ENCODE measurements at regions of chr7 and their contacts with region 1.

Region 1: DNA sequence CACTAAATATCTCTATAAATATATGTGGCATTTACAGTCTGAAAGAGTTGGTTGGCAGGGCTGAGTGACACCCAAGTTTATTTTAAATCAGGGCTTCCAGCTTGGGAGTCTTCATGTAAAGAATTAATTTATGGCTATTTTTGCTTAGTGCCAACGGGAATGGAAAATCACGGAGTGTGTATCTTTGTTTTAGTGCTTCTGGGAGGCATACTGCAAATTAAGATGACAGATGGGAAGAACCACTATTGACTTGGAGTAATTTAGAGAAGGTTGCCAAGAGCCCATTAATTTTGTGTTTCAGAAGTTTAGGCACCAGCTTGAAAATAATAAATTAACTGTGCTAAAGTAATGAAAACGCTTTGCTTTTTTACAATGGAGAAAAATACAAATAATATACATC is 135.2 kb downstream of the GPR37 start:
- DNase-seq: no peak
- H3K4me3 ChIP-seq: no peak overlapping the region
- H3K27ac ChIP-seq: no peak overlapping the region
- H3K4me1 ChIP-seq: no peaks in the 10 kb centered on the region
- H3K27me3 ChIP-seq: no peaks in the 10 kb centered on the region

Region 2: GRCh38 chr7:124219681-124220080 is 410.7 kb before region 1 on chr7:
- in situ Hi-C with region 1: no loop called
- DNase-seq: no peak
- H3K4me3 ChIP-seq: no peak overlapping the region
- H3K27ac ChIP-seq: no peak overlapping the region
- H3K4me1 ChIP-seq: no peaks in the 10 kb centered on the region
- H3K27me3 ChIP-seq: no peaks in the 10 kb centered on the region

Region 3: DNA sequence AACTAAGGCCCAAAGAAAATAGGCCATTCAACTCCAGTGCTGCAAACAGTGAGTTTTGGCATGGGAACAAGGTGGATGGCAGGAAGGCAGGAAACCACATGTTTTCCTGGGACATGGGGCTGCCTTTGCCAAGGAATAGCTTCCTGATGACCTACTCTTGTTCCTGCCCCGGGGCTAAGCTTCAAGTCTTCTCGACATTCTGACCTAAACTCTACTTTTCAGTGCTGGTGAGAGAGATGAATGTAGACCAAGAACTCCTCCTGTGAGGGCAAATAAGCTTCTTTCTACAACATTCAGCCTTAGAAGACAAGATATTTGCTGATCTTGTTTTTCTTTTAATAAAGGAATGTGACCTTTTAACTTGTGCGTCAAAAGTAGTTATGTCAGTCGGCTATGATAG is 63.8 kb before region 1 on chr7:
- in situ Hi-C with region 1: loop called (anchors 10 kb)
- DNase-seq: no peak
- H3K4me3 ChIP-seq: no peak overlapping the region
- H3K27ac ChIP-seq: no peak overlapping the region
- H3K4me1 ChIP-seq: no peaks in the 10 kb centered on the region
- H3K27me3 ChIP-seq: no peaks in the 10 kb centered on the region